Lower leg skin (tissue), 4 donors: ENCODE measurements at regions of chr3 and their contacts with region 1.

Region 1: DNA sequence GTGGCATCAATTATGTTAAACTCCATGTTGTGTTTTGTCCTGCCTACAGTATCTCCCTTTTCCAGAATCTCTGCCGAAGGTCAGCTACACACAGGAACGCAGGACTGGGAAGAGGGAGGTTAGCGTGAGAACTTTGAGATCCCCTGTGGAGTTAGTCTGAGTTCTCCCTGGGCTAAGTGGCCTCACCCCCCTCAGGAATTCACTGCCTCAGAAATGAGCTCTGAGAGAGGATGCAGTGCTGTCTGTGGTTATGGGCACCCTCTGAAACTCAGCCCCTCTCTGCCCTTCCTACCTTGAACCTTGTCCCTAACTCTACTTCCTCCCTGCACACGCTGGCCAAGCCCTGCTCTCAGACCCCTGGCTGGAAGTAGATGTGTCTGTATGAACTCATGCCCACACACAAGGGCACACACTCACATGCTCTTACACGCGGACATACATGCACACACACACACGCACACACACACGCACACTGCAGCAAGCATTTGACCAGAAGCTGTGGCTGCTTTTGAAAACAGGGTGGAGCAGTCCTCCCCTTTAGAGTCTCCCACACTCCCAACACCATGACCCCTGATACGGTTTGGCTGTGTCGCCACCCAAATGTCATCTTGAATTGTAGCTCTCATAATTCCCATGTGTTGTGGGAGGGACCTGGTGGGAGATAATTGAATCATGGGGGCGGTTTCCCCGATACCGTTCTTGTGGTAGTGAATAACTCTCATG is 5.3 kb upstream of the VIPR1 start:
- DNase-seq: peak in 1 of 2 donors; percentile 71
- H3K4me3 ChIP-seq: no peak overlapping the region
- CTCF ChIP-seq: no peak
- POLR2A ChIP-seq: no peak

Region 2: DNA sequence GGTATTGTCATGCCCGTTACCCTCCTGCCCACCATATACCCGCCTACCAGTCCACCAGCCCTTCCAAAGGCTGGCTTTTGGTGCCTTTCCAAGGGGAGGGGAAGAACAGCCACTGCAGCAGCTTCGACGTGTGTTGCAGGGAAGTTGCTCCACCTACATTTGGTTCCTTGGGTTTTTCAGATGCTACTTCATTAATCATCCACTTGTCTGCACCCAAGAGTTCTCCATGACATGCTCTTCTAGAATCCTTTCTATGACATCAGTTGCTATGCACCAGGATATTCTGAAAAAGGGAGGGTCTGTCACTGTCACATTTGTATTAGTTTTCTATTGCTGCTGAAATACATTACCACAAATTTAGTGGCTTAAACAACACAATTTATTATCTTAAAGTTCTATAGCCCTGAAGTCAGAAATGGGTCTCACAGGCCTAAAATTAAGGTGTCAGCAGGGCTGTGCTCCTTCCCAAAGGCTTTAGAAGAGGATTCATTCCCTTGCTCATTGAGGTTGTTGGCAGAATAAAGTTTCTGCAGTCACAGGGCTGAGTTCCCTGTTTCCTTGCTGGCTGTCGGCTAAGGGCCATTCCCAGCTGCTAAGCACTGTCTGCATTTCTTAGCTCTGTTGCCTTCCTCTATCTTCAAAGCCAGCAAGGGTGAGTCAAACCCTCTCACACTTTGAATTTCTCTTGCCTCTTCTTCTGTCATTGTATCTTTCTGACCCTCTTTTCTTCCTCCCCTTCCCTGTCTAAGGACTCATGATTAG is 86.6 kb before region 1 on chr3 and contains the start of gene LYZL4:
- intact Hi-C with region 1: no loop called
- DNase-seq: peak in 1 of 2 donors; percentile 50
- H3K4me3 ChIP-seq: no peak within 1 kb of the TSS
- CTCF ChIP-seq: no peak
- POLR2A ChIP-seq: no peak
- total RNA-seq, gene LYZL4: not detected

Region 3: DNA sequence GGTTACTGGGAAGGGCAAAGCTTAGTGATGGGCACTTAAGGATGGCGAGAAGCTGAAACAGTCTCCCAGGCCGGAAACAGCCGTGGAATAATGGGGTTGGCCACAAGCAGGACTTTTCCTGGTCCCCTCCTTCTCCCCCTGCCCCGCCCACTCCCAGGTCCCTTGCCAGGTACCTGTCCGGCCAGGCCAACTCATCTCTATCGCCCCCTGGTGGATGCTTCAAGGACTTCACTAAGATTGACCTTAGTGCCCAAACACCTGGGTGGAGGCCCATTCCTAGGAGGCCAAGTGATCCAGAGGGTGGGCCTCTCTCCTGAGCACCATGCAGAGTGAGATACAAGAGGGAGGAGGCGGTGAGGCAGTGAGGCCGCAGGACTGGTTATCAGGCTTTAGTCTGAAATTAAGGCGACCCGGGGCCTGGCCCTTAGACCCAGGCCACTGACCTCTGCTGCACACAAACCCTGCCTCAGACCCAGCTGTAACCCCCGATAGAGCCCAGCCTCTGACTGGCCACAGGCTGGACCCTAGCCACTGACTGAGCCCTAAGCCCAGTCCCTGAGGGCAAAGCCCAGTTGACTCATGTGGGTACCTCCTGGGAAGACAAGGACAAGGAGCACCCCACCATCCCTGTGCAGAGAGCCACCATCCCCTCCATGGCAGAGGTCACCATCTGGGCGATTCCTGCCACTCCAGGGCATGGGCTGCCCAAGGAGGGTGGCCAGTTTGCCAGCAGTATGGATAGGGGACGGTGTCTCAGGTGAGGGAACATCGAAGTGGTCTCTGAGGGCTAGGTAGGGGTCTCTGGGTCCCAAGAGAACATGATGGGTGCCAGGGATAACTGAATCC is 42.9 kb after region 1 on chr3:
- intact Hi-C with region 1: loop called (anchors 5 kb)
- DNase-seq: peak in 1 of 2 donors; percentile 42
- H3K4me3 ChIP-seq: no peak overlapping the region
- CTCF ChIP-seq: no peak
- POLR2A ChIP-seq: no peak